IMR-90 (cell line): ENCODE measurements at regions of chr1 and their contacts with region 1.

Region 1: GRCh38 chr1:151739590-151740375 is 18.5 kb downstream of the RIIAD1 start:
- DNase-seq: no peak
- ATAC-seq: no peak
- H3K4me3 ChIP-seq: no peak overlapping the region
- H3K27ac ChIP-seq: no peak overlapping the region
- H3K4me1 ChIP-seq: no peaks in the 10 kb centered on the region
- H3K27me3 ChIP-seq: peaks cover 41% of the 10 kb centered on the region
- CTCF ChIP-seq: no peak
- POLR2A ChIP-seq: no peak
- RAD21 ChIP-seq: no peak

Region 2: GRCh38 chr1:151294742-151295462 is 444.9 kb before region 1 on chr1:
- CTCF ChIA-PET with region 1: no interaction called
- POLR2A ChIA-PET with region 1: no interaction called
- dilution Hi-C with region 1: no loop called
- in situ Hi-C with region 1: no loop called
- intact Hi-C with region 1: loop called (anchors 2 kb)
- DNase-seq: no peak
- ATAC-seq: no peak
- H3K4me3 ChIP-seq: no peak overlapping the region
- H3K27ac ChIP-seq: no peak overlapping the region
- H3K4me1 ChIP-seq: no peaks in the 10 kb centered on the region
- H3K27me3 ChIP-seq: no peaks in the 10 kb centered on the region
- CTCF ChIP-seq: no peak
- POLR2A ChIP-seq: no peak
- RAD21 ChIP-seq: no peak

Region 3: DNA sequence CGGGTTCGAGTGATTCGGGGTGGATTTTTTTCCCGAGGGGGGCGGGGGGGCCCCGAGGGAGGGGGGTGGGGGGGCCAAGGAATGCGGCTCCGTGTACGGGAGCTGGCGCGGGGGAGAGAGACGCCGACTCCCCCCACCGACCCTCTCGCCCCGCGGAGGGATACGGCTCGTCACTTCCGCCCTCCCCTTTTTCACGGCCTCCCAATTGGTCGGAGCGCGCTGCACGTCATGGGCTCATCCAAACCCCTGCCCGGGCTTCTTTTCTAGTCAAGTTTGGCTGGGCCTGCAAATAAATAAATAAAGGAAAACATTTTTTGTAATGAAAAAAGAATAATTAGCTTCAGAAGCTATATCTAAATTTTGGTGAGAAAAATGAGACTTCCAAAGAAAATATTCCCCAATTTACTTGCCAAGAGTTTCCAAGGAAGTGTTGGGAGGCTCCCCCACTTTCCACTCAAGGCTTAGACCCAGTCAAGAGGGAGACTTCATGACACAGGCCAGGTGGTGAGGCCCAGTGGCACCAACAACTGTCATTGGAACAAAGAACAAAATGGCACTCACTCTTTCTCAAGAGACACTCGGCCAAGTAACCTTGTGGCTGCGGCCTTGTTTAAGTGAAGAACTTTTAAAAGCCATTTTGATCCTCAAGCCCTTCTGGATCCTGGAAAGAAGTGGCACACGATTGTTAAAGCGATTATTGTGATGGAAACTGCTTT is 280.3 kb before region 1 on chr1 and contains the start of gene POGZ:
- CTCF ChIA-PET with region 1: interaction called, 3 read pairs
- POLR2A ChIA-PET with region 1: no interaction called
- dilution Hi-C with region 1: no loop called
- in situ Hi-C with region 1: no loop called
- intact Hi-C with region 1: loop called (anchors 5 kb)
- DNase-seq: peak; percentile 98
- ATAC-seq: peak; percentile 84
- H3K4me3 ChIP-seq: peak within 1 kb of the TSS; percentile 95
- H3K27ac ChIP-seq: peak within 1 kb of the TSS; percentile 100
- H3K4me1 ChIP-seq: peaks cover 5% of the 10 kb centered on the region
- H3K27me3 ChIP-seq: peaks cover 8% of the 10 kb centered on the region
- CTCF ChIP-seq: no peak
- POLR2A ChIP-seq: peak; percentile 64; the same call in 1 of the 2 replicates
- RAD21 ChIP-seq: no peak
- total RNA-seq, gene POGZ: 15.0 and 20.8 TPM in 2 replicates

Region 4: DNA sequence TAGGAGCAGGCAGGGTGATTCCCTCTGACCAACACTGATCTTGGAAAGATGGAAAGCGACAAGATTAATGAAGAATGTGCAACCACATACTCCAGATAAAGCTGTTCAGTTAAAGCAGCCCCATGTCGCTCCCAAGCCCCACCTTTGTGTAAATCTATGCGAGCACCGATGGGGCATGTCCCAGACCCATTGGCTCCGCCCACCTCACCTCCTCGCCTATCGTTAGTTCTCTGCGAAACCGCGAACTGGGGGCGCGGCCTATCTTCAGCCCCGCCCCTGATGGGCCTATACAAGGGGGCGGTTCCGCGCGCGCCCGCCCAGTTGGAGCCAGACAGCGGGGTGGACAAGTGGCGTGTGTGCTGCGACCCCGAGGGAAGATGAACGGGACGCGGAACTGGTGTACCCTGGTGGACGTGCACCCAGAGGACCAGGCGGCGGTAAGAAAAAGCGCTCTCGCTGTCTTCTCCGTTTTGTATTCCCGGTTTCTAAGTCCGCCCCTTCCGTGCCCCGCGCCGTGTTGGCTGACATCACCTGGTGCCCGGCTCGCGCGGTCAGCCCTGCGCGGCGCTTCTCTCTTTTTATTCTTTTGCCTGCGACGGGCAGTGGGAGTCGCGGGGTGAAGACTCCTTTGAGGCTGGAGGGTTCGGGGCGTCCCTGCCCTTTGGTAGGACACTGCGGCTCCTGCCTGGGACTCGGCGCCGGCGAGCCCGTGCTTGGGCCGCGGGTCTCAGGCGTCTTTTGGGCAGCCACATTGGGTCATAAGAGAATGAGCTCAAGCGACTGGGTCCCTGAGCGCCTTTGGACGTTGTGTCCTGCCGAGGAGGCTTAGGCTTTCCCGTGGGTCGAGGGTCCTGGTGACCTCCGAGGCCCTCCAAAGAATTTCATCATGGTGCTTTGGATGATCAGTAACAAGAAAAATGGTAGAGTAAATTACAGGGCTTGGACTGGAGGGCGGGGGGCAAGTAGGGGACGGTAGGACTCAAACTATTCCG is 199.5 kb before region 1 on chr1 and contains the start of gene TUFT1:
- CTCF ChIA-PET with region 1: interaction called, 3 read pairs
- POLR2A ChIA-PET with region 1: no interaction called
- dilution Hi-C with region 1: no loop called
- in situ Hi-C with region 1: loop called (anchors 10 kb)
- intact Hi-C with region 1: no loop called
- DNase-seq: peak; percentile 89
- ATAC-seq: peak; percentile 86
- H3K4me3 ChIP-seq: peak within 1 kb of the TSS; percentile 73
- H3K27ac ChIP-seq: peak within 1 kb of the TSS; percentile 35
- H3K4me1 ChIP-seq: peaks cover 28% of the 10 kb centered on the region
- H3K27me3 ChIP-seq: no peaks in the 10 kb centered on the region
- CTCF ChIP-seq: no peak
- POLR2A ChIP-seq: peak; percentile 98
- RAD21 ChIP-seq: no peak
- total RNA-seq, gene TUFT1: 30.3 and 33.3 TPM in 2 replicates

Region 5: DNA sequence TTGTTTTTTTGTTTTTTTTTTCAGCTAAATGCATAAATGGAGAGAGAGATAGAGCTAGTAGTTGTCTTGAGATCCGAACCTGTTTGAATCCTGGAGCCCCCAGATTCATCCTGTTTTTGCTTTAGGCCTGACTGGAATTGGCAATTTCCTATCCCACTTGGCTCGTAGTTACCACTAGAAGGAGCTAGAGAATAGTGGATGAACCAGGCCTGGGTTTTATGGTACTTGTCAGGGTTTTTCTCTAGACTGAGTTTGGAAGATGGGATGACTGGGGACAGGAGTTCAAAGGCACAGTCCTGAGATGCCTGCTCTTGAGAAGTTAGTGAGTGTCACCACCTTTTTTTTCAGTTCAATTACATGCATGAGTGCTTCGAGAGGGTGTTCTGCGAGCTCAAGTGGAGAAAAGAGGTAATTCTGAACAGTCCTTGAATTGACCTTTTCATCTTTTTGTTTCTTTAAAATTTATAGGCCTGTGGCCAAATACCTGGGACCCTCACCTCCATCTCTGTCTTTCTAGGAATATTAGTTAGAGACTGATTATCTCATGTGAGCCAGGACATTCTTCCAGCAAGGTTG is 46.6 kb before region 1 on chr1:
- CTCF ChIA-PET with region 1: interaction called, 4 read pairs
- POLR2A ChIA-PET with region 1: no interaction called
- dilution Hi-C with region 1: no loop called
- in situ Hi-C with region 1: no loop called
- intact Hi-C with region 1: loop called (anchors 1 kb)
- DNase-seq: peak; percentile 47
- ATAC-seq: peak; percentile 67
- H3K4me3 ChIP-seq: no peak overlapping the region
- H3K27ac ChIP-seq: no peak overlapping the region
- H3K4me1 ChIP-seq: no peaks in the 10 kb centered on the region
- H3K27me3 ChIP-seq: no peaks in the 10 kb centered on the region
- CTCF ChIP-seq: peak; percentile 68
- POLR2A ChIP-seq: no peak
- RAD21 ChIP-seq: peak; percentile 73